ENCODE measurements at regions of chr20 and their contacts with region 1.

Region 1: GRCh38 chr20:815914-816606 is 17.5 kb upstream of the FAM110A start:
- DNase-seq: peak in 41 of 42 donors; percentile 41 to 86 (median 68)

Region 2: DNA sequence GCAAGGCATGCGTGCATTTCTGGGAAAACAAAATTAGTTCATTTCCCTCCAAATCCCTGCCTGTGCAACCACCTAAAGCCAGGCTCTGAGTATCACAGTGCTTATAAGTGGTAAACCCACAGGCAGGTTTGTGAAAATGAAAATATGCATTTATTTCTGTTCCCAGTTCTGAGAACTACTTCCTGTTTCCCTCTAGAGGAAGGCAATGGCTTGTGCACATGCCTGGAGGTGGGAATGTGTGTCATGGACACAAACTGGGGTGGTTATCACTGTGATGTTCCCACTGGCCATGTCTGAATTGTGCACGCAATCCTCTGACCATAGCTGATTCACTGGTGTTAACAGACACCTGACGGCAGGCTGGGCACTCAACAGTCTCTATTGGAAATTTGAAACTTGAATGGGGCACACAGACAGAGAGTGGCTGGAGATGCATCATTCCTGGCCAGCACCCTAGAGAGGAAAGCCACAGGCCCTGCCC is 43.7 kb after region 1 on chr20:
- intact Hi-C with region 1: no loop called
- DNase-seq: no peak

Region 3: GRCh38 chr20:956330-956951 is 140.4 kb after region 1 on chr20:
- intact Hi-C with region 1: loop called (anchors 5 kb)
- DNase-seq: peak; percentile 33 to 87 (median 75)

Region 4: GRCh38 chr20:1150218-1150617 is 334.2 kb after region 1 on chr20:
- intact Hi-C with region 1: no loop called
- DNase-seq: peak in 23 of 42 donors; percentile 4 to 75 (median 32)

Region 5: DNA sequence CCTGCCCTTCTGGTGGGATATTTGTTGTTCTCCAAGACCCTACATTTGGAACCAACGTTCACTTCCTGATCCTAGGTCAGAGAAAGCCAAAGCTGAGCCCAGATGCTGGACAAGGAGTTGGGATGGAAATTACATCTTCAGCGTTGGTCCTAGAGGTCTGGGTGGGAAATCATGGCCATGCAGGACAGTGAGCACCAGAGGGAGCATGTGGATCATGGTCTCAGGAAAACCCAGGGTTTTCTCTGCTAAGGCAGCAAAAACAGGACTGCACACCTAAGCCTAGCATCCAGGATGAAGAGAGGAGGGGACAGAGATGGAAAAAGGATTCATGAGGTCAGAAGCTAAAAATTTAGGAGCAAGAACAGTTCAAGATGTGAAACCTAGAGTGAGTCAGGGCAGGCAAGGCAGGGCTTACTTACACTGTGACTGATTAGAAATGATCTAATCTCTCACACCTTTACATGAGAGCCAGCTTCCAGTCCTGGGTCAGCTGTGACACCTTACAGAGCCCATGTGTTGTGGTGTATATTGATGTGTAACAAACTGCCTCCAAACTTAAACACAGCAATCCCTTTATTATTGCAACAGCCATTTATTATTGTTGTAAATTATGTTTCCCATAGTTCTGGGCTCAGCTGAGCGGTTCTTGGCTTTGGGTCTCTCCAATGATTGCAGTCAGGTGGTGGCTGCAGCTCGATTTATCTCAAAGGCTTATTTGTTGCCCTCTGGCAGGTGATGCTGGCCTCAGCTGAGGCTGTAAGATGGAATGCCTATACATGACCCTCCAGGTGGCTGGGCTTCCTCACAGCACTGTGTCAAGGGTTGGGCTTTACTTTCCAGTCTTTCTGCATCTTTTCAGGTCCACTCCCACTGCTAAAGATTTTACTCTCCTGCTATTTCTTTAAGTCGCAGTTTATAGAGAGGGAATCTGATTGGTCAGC is 393.7 kb after region 1 on chr20:
- intact Hi-C with region 1: loop called (anchors 10 kb)
- DNase-seq: no peak

Measured in head of caudate nucleus (tissue), 42 donors.